Activated T-helper 2 cell treated with anti-CD3 and anti-CD28 coated beads, Interferon-gamma antibody, Interleukin-2, Interleukin-4, amounts not matched to agents 10 μg/mL and 5 μg/mL and 100 μg/mL, durations not matched to agents 14 hours and 24 hours and 36 hours (primary cell): ENCODE measurements at regions of chr6 and their contacts with region 1.

Region 1: DNA sequence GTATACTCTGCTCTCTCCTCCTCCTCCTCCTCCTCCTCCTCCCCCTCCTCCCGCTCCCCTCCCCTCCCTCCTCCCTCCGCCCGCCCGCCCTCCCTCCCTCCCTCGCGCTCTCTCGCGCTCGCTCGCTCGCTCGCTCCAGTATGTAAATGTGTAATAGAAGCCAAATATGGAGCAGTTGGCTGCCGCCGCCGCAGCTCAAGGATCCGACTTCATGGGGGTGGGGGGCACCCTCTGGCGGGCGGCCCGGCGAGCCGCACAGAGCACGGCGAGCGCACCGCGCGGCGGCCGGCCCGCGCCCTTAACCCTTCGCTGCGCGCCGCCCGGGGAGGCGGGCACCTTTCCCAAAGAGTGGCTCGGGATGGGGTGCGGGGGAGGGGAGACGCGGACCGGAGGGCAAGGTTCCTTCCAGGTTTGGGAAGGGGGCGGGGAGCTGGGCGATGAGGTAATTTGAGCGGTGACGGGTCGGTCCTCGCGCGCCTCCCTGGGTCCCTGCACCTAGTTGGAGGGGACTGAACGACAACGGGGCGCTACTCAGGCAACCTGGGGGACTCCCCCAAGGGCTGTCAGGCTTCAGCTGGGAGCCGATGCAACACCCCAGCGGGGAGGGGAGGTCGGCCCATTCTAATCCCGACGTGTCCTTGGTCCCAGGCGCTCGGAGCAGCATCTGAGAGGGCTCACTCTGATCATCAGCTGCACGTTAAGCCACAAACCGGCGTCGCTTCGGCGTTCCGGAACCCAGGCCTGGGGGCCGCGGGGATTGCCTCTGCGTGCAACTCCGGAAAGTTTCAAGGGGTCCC is 409 bp upstream of the ATXN1 start:
- DNase-seq: peak; percentile 83
- H3K4me3 Mint-ChIP-seq: peak overlapping the region; percentile 99
- H3K27ac Mint-ChIP-seq: peak overlapping the region; percentile 99
- H3K4me1 Mint-ChIP-seq: peaks cover 62% of the 10 kb centered on the region
- H3K27me3 Mint-ChIP-seq: no peaks in the 10 kb centered on the region

Region 2: GRCh38 chr6:16332175-16332542 is 429.5 kb before region 1 on chr6:
- intact Hi-C with region 1: loop called (anchors 1 kb)
- DNase-seq: peak; percentile 71
- H3K4me3 Mint-ChIP-seq: no peak overlapping the region
- H3K27ac Mint-ChIP-seq: no peak overlapping the region
- H3K4me1 Mint-ChIP-seq: peaks cover 11% of the 10 kb centered on the region
- H3K27me3 Mint-ChIP-seq: no peaks in the 10 kb centered on the region

Region 3: DNA sequence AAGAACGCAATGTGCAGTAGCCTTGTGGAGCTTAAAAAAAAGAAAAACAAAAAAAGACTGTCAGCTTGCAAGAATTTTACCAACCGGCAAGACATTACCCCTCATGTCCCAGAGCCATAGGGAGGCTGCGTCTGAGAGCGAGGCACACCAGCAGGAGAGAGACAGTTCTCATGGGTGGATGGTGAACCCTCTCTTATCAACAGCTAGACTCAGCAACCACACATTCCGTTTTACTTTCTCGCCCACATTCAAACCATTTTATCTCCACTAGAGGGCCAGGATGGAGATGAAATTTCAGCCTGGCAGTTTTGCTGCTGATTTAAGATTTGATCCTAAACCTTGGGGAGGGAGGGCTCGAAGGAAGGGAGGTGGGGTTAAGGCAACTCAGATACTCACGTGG is 247.4 kb before region 1 on chr6:
- intact Hi-C with region 1: loop called (anchors 2 kb)
- DNase-seq: peak; percentile 26
- H3K4me3 Mint-ChIP-seq: peak overlapping the region; percentile 49
- H3K27ac Mint-ChIP-seq: peak overlapping the region; percentile 75
- H3K4me1 Mint-ChIP-seq: peaks cover 76% of the 10 kb centered on the region
- H3K27me3 Mint-ChIP-seq: no peaks in the 10 kb centered on the region

Region 4: GRCh38 chr6:16670183-16670582 is 91.5 kb before region 1 on chr6:
- intact Hi-C with region 1: loop called (anchors 5 kb)
- DNase-seq: no peak
- H3K4me3 Mint-ChIP-seq: peak overlapping the region; percentile 50
- H3K27ac Mint-ChIP-seq: peak overlapping the region; percentile 89
- H3K4me1 Mint-ChIP-seq: peaks cover 74% of the 10 kb centered on the region
- H3K27me3 Mint-ChIP-seq: no peaks in the 10 kb centered on the region

Region 5: DNA sequence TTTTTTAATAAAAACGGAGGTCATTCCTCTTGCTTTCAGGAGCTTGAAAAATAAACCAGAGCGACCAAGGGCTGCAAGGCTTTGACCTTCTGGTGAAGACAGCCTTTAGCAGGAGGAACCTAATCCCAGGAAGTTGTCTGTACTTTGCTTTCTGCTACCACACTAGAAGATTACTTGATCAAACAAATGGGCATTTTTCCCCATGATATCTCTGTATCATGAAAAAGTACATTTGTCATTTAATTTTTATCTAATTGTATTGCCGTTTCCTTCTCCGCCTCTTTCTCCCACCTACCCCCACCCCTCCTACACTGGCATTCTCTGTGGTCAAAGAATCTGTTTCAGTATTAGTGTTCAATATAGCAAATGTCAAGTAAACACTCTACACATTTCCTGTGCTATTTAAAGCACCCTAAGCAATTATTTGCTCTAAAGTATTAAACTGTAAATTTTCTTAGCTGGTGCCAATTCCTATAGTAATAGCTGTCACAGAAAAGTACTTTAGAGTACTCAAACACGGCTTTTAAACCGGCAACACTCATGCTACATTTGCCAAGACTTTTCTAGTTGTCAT is 30.1 kb before region 1 on chr6:
- intact Hi-C with region 1: loop called (anchors 2 kb)
- DNase-seq: peak; percentile 48
- H3K4me3 Mint-ChIP-seq: peak overlapping the region; percentile 65
- H3K27ac Mint-ChIP-seq: peak overlapping the region; percentile 91
- H3K4me1 Mint-ChIP-seq: peaks cover 60% of the 10 kb centered on the region
- H3K27me3 Mint-ChIP-seq: no peaks in the 10 kb centered on the region

Region 6: DNA sequence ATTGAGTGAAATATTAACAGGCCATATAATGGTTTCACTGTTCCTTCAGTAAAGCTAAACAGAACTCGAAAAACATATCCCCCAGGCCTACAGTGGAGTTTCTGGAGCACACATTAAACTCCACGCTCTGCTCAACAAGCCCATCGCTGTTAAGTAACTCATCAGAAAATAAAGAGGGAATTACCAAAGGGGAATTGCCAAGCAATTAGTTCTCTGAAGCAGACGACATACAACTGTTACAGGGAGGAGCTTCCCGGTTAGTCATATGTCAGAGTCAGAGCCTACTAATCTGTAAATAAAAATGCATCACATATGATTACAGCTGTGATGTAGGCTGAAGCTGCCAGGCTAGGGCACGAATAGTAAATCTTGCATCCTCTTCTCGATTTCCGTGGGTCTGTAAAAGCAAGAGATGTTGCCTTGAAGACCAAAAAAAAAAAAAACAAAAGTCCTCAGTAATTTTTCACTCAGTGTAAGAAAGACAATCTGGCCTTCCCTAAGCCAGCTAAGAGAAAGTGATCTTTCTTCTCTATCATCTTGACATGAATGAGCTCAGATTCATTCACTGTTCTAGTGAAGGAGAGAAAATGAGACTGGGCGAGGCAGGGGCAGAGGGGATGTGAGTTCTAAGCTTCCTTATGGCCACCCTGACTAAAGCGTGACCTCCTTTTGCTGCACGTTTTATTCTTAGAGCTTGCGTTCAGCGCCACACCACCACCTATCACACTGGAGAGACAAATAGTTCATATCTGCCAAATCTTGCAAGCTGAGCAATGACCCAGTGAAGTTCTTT is 14.2 kb before region 1 on chr6:
- intact Hi-C with region 1: no loop called
- DNase-seq: no peak
- H3K4me3 Mint-ChIP-seq: no peak overlapping the region
- H3K27ac Mint-ChIP-seq: no peak overlapping the region
- H3K4me1 Mint-ChIP-seq: peaks cover 52% of the 10 kb centered on the region
- H3K27me3 Mint-ChIP-seq: no peaks in the 10 kb centered on the region

Region 7: DNA sequence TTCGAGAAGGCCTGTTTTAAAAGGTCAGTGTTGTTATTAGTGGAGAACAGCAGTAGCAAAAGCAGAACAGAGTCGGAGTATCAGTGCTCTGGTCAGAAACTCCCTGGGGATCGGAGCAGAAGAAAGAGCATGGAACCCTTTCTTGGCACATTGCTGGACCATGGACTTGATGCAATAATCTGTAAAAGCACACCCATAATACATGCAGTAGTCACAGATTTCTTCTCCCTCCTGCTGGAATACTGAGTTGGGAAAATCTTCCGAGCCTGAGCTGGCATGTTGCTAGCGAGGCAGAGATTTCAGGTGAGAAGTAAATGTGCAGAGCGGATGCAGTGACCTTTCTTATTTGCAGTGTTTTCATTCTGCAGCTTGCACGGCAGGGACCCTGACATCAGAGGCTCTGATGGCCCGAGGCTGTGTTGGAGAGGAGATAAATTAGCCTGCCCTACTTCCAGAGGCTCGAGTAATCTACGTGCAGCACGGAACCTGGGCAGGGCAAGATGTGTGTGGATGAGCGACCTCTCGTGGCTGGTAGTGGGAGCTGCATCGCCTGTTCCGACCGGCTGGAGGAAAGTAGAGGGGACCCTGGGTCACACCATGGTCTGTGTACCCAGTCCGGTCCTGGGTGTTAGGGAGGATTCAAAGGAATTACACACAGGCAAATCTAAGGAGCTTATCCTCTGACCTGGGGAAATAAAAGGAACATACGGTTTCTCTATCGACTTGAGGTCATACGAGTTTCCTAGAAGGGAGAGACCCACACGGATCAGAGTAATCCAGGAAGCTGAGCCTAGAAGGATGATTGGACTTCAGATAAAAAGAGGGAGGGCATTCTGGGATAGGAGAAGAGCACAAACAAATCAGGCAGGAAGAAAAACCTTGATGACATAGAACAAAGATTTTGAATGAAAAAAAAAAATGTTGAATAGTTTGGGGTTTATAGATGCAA is 203.2 kb after region 1 on chr6:
- intact Hi-C with region 1: loop called (anchors 2 kb)
- DNase-seq: peak; percentile 47
- H3K4me3 Mint-ChIP-seq: no peak overlapping the region
- H3K27ac Mint-ChIP-seq: no peak overlapping the region
- H3K4me1 Mint-ChIP-seq: peaks cover 18% of the 10 kb centered on the region
- H3K27me3 Mint-ChIP-seq: peaks cover 30% of the 10 kb centered on the region